Natural killer cell (primary cell): ENCODE measurements at regions of chr10 and their contacts with region 1.

Region 1: DNA sequence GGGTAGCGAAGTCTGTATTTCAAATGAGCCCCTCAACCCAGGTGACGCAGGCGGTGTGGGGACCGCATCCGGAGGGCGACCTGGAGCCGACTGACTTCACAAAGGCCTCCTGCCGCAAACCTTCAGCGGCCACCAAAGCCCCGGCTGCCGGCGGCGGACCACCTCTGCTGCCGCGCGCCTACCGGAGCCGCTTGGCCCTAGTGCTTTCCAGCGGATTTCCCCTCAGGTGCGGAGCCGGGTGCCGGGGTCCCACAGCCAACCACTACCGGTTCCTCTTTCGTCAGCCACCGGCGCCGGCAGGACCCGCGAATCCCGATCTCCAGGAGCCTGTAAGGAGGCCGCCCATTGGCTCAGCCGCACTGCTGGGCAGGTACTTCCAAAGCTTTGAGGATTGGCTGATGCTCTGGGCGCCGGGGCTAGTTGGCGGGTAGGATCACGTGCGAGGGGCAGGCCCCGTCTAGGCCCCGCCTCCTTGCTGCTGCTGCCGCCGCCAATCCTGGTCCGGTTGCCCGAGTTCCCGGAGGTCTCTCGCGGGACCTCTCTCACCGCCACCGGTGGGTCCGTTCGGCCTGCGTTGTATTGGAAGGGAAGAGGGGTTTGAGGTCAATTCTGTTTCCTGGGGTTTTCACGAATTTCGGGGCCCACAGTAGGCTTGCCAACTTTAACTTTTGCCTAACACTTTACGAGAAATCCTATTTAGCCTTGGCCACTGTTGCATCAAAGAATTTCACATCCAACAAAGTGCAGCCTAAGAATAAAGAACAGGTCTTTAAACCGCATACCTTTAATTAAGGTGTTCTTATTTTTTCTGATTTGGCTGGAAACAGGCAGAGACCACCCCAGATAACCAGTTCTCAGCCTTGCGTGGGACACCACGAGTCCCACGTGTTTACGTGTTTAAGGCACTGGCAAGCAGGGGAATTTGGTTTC is at the start of gene GSTO2:
- DNase-seq: peak; percentile 96 to 99
- ATAC-seq: peak; percentile 90 to 98 (median 93)
- H3K4me3 ChIP-seq: peak within 1 kb of the TSS; percentile 74
- H3K4me3 Mint-ChIP-seq: peak within 1 kb of the TSS; percentile 90
- H3K27ac ChIP-seq: peak within 1 kb of the TSS; percentile 80
- H3K27ac Mint-ChIP-seq: peak within 1 kb of the TSS; percentile 94 to 97
- H3K4me1 ChIP-seq: peaks cover 19% of the 10 kb centered on the region
- H3K4me1 Mint-ChIP-seq: peaks cover 28 to 31% of the 10 kb centered on the region in 2 donors
- H3K27me3 ChIP-seq: peaks cover under 1% of the 10 kb centered on the region
- H3K27me3 Mint-ChIP-seq: peaks cover 0 to 2% of the 10 kb centered on the region in 2 donors
- CTCF ChIP-seq: no peak
- total RNA-seq, gene GSTO2: 0.75 to 1.4 (median 0.84) TPM

Region 2: DNA sequence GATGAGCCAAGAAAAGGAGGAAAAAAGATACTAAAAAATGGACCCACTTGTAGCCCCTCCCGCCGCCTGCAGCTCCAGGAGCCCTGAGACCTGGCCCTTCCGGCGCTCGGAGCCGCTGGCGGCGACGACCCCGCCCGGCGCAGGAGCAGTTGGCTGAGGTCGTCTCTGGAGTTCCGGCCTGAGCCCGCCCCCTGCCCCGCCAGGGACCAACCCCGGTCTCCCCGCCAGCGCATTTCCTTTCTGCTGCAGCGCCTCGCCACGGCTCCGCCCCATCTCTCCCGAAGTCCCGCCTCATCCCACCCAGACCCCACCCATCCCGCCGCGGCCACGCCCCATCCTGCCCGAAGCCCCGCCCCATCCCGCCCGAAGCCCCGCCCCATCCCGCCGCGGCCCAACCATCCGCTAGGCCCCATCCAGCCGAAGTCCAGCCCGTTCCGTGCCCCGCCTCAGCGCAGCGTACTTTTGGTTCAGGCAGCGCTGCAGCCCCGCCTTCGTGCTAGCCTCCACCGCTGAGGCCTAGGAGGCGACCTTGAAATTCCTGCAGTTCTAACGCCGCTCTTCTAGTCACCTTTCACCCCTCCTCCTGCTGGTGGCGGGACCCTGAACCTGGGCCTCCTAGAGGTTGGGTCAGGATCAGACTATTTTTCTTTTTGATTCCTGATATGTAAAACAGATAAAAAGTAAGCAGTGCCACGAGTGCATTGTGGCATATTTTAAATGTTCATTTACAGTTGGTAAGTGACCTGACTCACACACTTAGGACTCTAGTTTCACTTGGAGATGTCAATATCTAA is 350.7 kb before region 1 on chr10 and contains the start of gene STN1:
- intact Hi-C with region 1: loop called (anchors 5 kb)
- DNase-seq: peak; percentile 88 to 97
- ATAC-seq: peak; percentile 89 to 98 (median 92)
- H3K4me3 ChIP-seq: peak within 1 kb of the TSS; percentile 71
- H3K4me3 Mint-ChIP-seq: peak within 1 kb of the TSS; percentile 96
- H3K27ac ChIP-seq: peak within 1 kb of the TSS; percentile 69
- H3K27ac Mint-ChIP-seq: peak within 1 kb of the TSS; percentile 94 to 97
- H3K4me1 ChIP-seq: peaks cover 41% of the 10 kb centered on the region
- H3K4me1 Mint-ChIP-seq: peaks cover 34 to 40% of the 10 kb centered on the region in 2 donors
- H3K27me3 ChIP-seq: no peaks in the 10 kb centered on the region
- H3K27me3 Mint-ChIP-seq: no peaks in the 10 kb centered on the region
- CTCF ChIP-seq: no peak
- total RNA-seq, gene STN1: 31.7 to 53.4 (median 34.0) TPM

Region 3: GRCh38 chr10:104231784-104232612 is 37.0 kb before region 1 on chr10 and contains the start of gene CFAP43:
- intact Hi-C with region 1: loop called (anchors 1 kb)
- DNase-seq: peak; percentile 99
- ATAC-seq: peak; percentile 98 to 100 (median 99)
- H3K4me3 ChIP-seq: peak within 1 kb of the TSS; percentile 59
- H3K4me3 Mint-ChIP-seq: peak within 1 kb of the TSS; percentile 86
- H3K27ac ChIP-seq: no peak within 1 kb of the TSS
- H3K27ac Mint-ChIP-seq: peak within 1 kb of the TSS; percentile 70 to 88
- H3K4me1 ChIP-seq: peaks cover 12% of the 10 kb centered on the region
- H3K4me1 Mint-ChIP-seq: peaks cover 13 to 19% of the 10 kb centered on the region in 2 donors
- H3K27me3 ChIP-seq: peaks cover 7% of the 10 kb centered on the region
- H3K27me3 Mint-ChIP-seq: peaks cover 21 to 47% of the 10 kb centered on the region in 2 donors
- CTCF ChIP-seq: no peak
- total RNA-seq, gene CFAP43: 0.16 TPM in 1 of 3 donors, not detected in the others

Region 4: DNA sequence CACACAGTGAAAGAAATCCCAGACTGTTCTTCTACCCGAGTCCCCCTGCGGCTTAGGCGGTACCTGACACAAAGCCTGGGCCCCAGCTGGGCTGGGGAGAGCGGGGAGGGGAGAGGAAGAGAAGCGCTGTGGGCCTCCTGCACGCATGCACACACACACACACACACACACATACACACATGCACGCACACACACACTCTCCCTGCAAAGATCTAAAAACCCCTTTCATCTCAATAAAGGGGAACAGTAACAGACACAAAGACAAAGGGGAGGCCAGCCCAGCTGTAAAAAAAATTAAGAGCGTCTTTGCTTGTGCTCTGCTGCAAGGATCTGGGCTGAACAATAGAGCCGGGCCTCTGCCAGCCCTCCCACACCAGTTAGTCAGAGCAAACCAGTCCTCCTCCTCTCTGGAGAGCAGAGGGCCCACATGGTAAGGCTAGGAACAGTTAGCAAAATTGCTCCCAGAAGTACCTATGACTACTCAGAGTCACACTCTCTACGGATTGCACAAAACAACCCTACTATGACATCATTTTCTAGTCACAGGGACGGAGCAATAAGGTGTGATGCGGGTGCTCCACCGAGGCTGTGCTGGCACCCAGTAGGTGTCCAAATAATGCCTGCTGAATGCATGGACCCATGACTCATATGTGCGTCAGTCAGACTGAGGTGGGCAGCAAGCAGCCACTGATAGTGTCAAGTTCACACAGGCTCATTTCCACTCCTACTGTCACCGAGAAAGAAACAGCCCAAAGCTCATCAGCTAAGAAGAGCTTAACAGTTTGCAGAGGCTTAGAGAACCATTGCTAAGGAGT is 60.1 kb after region 1 on chr10:
- intact Hi-C with region 1: loop called (anchors 2 kb)
- DNase-seq: peak; percentile 84 to 90
- ATAC-seq: peak; percentile 76 to 91 (median 85)
- H3K4me3 ChIP-seq: peak overlapping the region; percentile 17
- H3K4me3 Mint-ChIP-seq: peak overlapping the region; percentile 82
- H3K27ac ChIP-seq: peak overlapping the region; percentile 94
- H3K27ac Mint-ChIP-seq: peak overlapping the region; percentile 98 to 100
- H3K4me1 ChIP-seq: peaks cover 96% of the 10 kb centered on the region
- H3K4me1 Mint-ChIP-seq: peaks cover 97 to 99% of the 10 kb centered on the region in 2 donors
- H3K27me3 ChIP-seq: no peaks in the 10 kb centered on the region
- H3K27me3 Mint-ChIP-seq: no peaks in the 10 kb centered on the region
- CTCF ChIP-seq: no peak

Region 5: DNA sequence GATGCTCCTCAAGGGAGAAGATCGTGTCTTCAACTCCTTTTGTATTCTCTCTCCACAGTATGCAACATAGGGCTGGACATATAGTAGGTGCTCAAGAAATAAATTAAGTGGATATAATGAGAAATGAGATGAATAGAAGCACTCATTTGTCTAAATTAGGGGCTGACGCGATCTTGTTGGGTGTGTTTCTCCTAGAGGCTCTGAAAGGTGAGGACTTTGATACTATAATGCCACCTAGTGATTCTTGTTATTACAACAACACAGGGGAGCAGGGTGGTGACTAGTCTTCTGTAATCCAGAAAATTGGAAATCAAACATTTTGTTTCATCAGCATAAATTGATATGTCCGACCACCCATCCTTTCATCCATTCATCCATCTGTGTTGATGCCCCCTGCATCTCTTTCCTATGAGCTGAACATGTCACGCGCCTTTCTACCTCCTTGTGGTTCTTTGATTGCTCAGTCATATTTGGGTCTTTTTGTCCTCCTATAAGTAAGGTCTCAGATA is 81.2 kb after region 1 on chr10:
- intact Hi-C with region 1: loop called (anchors 1 kb)
- DNase-seq: peak in 1 of 2 donors; percentile 84
- ATAC-seq: peak; percentile 68 to 72 (median 71)
- H3K4me3 ChIP-seq: no peak overlapping the region
- H3K4me3 Mint-ChIP-seq: no peak overlapping the region
- H3K27ac ChIP-seq: peak overlapping the region; percentile 47
- H3K27ac Mint-ChIP-seq: no peak overlapping the region
- H3K4me1 ChIP-seq: peaks cover 41% of the 10 kb centered on the region
- H3K4me1 Mint-ChIP-seq: peaks cover 16 to 29% of the 10 kb centered on the region in 2 donors
- H3K27me3 ChIP-seq: no peaks in the 10 kb centered on the region
- H3K27me3 Mint-ChIP-seq: no peaks in the 10 kb centered on the region
- CTCF ChIP-seq: peak; percentile 73